ENCODE measurements at regions of chr6 and their contacts with region 1.

Region 1: DNA sequence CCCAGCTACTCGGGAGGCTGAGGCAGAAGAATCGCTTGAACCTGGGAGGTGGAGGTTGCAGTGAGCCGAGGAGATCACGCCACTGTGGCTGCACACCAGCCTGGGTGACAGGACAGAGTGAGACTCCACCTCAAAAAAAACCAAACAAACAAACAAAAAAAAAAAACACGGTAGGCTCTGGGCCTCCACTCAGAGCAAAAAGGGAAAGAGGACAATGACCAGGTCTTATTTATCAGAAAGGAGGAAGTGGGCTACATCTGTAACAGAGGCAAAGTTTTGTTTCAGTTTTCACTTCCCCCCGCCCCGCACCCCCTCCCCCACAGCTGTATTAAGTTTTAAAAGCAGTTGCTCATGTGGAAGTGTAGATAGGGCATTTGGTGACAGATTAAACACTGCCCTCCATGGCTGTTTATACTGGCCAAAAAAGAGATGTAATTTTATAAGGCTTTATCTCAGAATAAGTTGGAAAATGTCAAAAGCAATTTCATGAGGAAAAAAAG is 114.6 kb downstream of the RCAN2 start:
- DNase-seq: no peak
- H3K4me3 ChIP-seq: peak overlapping the region in 1 of 2 donors; percentile 16
- H3K27ac ChIP-seq: peak overlapping the region; percentile 63 to 67
- H3K4me1 ChIP-seq: peaks cover 11 to 62% of the 10 kb centered on the region in 2 donors
- H3K27me3 ChIP-seq: no peaks in the 10 kb centered on the region
- CTCF ChIP-seq: no peak

Region 2: GRCh38 chr6:46325561-46326530 is 50.8 kb before region 1 on chr6:
- intact Hi-C with region 1: loop called (anchors 5 kb)
- DNase-seq: no peak
- H3K4me3 ChIP-seq: no peak overlapping the region
- H3K27ac ChIP-seq: peak overlapping the region in 1 of 2 donors; percentile 17
- H3K4me1 ChIP-seq: peaks cover 0 to 55% of the 10 kb centered on the region in 2 donors
- H3K27me3 ChIP-seq: no peaks in the 10 kb centered on the region
- CTCF ChIP-seq: no peak

Region 3: GRCh38 chr6:46592046-46592445 is 215.4 kb after region 1 on chr6:
- intact Hi-C with region 1: no loop called
- DNase-seq: no peak
- H3K4me3 ChIP-seq: no peak overlapping the region
- H3K27ac ChIP-seq: no peak overlapping the region
- H3K4me1 ChIP-seq: peaks cover 0 to 13% of the 10 kb centered on the region in 2 donors
- H3K27me3 ChIP-seq: no peaks in the 10 kb centered on the region
- CTCF ChIP-seq: no peak

Region 4: DNA sequence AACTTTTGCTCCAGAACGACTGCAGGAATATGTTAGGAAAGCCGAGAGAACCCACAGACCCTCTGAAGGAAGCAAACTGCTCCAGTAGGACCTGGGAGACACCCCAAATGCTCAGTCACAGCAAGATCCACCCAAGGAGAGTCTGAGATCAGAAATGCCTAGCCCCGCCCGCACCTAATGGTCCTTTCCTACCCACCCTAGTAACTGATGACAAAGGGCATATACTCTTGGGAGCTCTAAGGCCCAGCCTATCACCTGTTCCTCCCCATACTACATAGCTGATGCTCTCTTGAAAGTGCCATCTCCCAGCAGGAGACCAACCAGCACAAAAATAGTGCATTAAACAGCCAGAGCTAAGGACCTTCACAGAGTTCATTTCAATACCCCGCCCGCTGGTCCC is 1168.6 kb after region 1 on chr6:
- intact Hi-C with region 1: no loop called
- DNase-seq: no peak
- H3K4me3 ChIP-seq: no peak overlapping the region
- H3K27ac ChIP-seq: no peak overlapping the region
- H3K4me1 ChIP-seq: no peaks in the 10 kb centered on the region
- H3K27me3 ChIP-seq: no peaks in the 10 kb centered on the region
- CTCF ChIP-seq: no peak